HCT116 (cell line): ENCODE measurements at regions of chr18 and their contacts with region 1.

Region 1: GRCh38 chr18:76892832-76893231 is 70.5 kb downstream of the ZNF236 start:
- DNase-seq: no peak
- ATAC-seq: no peak
- H3K4me3 ChIP-seq: no peak overlapping the region
- H3K27ac ChIP-seq: no peak overlapping the region
- H3K4me1 ChIP-seq: no peaks in the 10 kb centered on the region
- H3K27me3 ChIP-seq: no peaks in the 10 kb centered on the region
- CTCF ChIP-seq: no peak
- POLR2A ChIP-seq: no peak
- RAD21 ChIP-seq: no peak

Region 2: DNA sequence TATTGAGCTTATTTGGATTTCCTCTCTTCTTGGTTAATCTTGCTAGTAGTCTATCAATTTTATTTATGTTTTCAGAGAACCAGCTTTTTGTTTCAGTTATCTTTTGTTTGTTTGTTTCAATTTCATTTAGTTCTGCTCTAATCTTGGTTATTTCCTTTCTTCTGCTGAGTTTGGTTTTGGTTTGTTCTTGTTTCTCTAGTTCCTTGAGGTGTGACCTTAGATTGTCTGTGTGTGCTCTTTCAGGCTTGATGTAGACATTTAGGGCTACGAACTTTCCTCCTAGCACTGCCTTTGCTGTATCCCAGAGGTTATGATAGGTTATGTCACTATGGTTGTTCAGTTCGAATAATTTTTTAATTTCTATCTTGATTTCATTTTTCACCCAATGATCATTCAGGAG is 71.1 kb after region 1 on chr18:
- CTCF ChIA-PET with region 1: no interaction called
- POLR2A ChIA-PET with region 1: no interaction called
- RAD21 ChIA-PET with region 1: no interaction called
- intact Hi-C with region 1: loop called (anchors 5 kb)
- DNase-seq: no peak
- ATAC-seq: no peak
- H3K4me3 ChIP-seq: no peak overlapping the region
- H3K27ac ChIP-seq: no peak overlapping the region
- H3K4me1 ChIP-seq: no peaks in the 10 kb centered on the region
- H3K27me3 ChIP-seq: no peaks in the 10 kb centered on the region
- CTCF ChIP-seq: no peak
- POLR2A ChIP-seq: no peak
- RAD21 ChIP-seq: no peak